Breast epithelium (tissue), 4 donors: ENCODE measurements at regions of chr10 and their contacts with region 1.

Region 1: DNA sequence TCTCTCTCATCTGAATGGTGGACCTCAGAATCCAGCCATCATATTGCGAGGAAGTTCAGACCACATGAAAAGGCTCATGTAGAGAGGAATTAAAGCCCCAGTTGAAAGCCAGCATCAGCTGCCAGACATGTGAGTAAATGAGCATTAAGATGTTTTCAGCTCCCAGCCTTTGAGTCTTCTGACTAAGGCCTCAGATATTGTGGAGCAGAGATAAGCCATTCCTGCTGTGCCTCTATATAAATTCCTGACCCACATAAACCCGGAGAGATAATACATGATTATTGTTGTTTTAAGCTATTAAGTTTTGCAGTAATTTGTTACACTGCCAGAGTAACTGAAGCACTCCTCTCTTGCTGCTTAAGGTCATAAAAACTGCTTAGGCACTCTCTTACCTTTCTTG is 14.6 kb downstream of the FAM149B1 start:
- DNase-seq: no peak
- H3K4me3 ChIP-seq: no peak overlapping the region
- H3K27ac ChIP-seq: no peak overlapping the region
- H3K4me1 ChIP-seq: no peaks in the 10 kb centered on the region
- H3K27me3 ChIP-seq: no peaks in the 10 kb centered on the region
- CTCF ChIP-seq: no peak
- POLR2A ChIP-seq: no peak

Region 2: GRCh38 chr10:71957546-71958275 is 1224.9 kb before region 1 on chr10:
- intact Hi-C with region 1: loop called (anchors 10 kb)
- DNase-seq: no peak
- H3K4me3 ChIP-seq: no peak overlapping the region
- H3K27ac ChIP-seq: peak overlapping the region in 1 of 2 donors; percentile 40
- H3K4me1 ChIP-seq: no peaks in the 10 kb centered on the region
- H3K27me3 ChIP-seq: no peaks in the 10 kb centered on the region
- CTCF ChIP-seq: no peak
- POLR2A ChIP-seq: no peak

Region 3: DNA sequence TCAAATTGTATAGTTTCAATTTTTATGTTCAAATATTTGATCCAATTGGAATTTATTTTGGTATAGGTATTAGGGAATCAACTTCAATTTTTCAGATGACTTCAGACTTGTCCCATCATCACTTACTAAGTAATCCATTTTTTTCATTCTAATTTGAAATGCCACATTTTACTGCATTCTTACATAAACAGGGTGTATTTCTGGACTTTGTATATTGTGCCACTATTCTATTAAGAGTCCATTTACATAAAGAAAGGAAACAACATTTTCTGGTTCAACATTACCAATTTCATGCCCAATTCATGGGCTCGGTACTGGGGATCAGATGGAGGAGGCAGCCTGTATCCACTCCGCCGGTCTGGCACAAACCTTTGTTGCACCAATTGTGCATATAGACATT is 30.6 kb before region 1 on chr10:
- intact Hi-C with region 1: no loop called
- DNase-seq: no peak
- H3K4me3 ChIP-seq: no peak overlapping the region
- H3K27ac ChIP-seq: no peak overlapping the region
- H3K4me1 ChIP-seq: no peaks in the 10 kb centered on the region
- H3K27me3 ChIP-seq: no peaks in the 10 kb centered on the region
- CTCF ChIP-seq: no peak
- POLR2A ChIP-seq: no peak